MCF 10A (cell line): ENCODE measurements at regions of chr17 and their contacts with region 1.

Region 1: GRCh38 chr17:45051060-45051719 is at the start of gene DCAKD:
- DNase-seq: peak; percentile 95
- H3K4me3 Mint-ChIP-seq: peak within 1 kb of the TSS; percentile 75
- H3K27ac Mint-ChIP-seq: peak within 1 kb of the TSS; percentile 77
- H3K4me1 Mint-ChIP-seq: peaks cover 16% of the 10 kb centered on the region
- H3K27me3 Mint-ChIP-seq: no peaks in the 10 kb centered on the region
- CTCF ChIP-seq: no peak
- total RNA-seq, gene DCAKD: 23.1 and 23.3 TPM in 2 replicates

Region 2: GRCh38 chr17:44899069-44899782 is 152.0 kb before region 1 on chr17 and contains the start of gene EFTUD2:
- CTCF ChIA-PET with region 1: interaction called, 4 read pairs
- POLR2A ChIA-PET with region 1: interaction called, 20 read pairs
- intact Hi-C with region 1: no loop called
- DNase-seq: peak; percentile 87
- H3K4me3 Mint-ChIP-seq: peak within 1 kb of the TSS; percentile 80
- H3K27ac Mint-ChIP-seq: peak within 1 kb of the TSS; percentile 99
- H3K4me1 Mint-ChIP-seq: peaks cover 21% of the 10 kb centered on the region
- H3K27me3 Mint-ChIP-seq: no peaks in the 10 kb centered on the region
- CTCF ChIP-seq: no peak
- total RNA-seq, gene EFTUD2: 119 and 125 TPM in 2 replicates

Region 3: GRCh38 chr17:44956998-44957981 is 93.9 kb before region 1 on chr17:
- CTCF ChIA-PET with region 1: no interaction called
- POLR2A ChIA-PET with region 1: no interaction called
- intact Hi-C with region 1: no loop called
- DNase-seq: no peak
- H3K4me3 Mint-ChIP-seq: no peak overlapping the region
- H3K27ac Mint-ChIP-seq: no peak overlapping the region
- H3K4me1 Mint-ChIP-seq: peaks cover 6% of the 10 kb centered on the region
- H3K27me3 Mint-ChIP-seq: no peaks in the 10 kb centered on the region
- CTCF ChIP-seq: no peak

Region 4: DNA sequence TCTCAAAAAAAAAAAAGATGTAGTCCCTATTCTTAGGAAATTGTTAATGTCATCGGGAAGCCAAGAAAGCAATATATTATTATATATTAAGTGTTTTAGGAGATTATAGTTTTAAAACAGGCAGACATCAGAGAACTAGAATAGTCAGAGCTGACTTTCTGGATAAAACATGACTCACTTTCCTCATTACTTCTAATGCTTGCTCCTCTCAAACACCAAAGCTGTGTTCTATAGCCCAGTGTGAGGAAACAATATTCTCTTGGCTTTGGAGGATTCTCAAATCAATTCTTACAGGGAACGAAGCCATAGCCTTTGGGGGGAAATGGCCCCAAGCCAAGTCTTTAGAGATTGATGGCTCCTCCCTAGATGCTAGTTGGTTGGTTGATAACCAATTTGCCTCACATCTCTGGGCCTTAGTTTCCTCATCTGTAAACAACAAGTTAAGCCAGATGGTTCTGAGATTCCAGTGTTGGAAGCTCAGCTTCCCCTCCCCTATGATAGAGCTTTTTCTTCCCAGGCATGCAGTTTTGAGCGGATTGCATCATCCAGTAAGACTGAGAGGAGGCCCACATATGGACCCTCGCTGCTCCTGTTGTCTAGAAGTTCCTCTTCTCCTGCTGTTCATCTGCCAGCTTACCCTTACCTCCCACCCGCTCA is 22.4 kb after region 1 on chr17:
- CTCF ChIA-PET with region 1: no interaction called
- POLR2A ChIA-PET with region 1: interaction called, 12 read pairs
- intact Hi-C with region 1: no loop called
- DNase-seq: no peak
- H3K4me3 Mint-ChIP-seq: no peak overlapping the region
- H3K27ac Mint-ChIP-seq: peak overlapping the region; percentile 25
- H3K4me1 Mint-ChIP-seq: peaks cover 16% of the 10 kb centered on the region
- H3K27me3 Mint-ChIP-seq: no peaks in the 10 kb centered on the region
- CTCF ChIP-seq: no peak

Region 5: DNA sequence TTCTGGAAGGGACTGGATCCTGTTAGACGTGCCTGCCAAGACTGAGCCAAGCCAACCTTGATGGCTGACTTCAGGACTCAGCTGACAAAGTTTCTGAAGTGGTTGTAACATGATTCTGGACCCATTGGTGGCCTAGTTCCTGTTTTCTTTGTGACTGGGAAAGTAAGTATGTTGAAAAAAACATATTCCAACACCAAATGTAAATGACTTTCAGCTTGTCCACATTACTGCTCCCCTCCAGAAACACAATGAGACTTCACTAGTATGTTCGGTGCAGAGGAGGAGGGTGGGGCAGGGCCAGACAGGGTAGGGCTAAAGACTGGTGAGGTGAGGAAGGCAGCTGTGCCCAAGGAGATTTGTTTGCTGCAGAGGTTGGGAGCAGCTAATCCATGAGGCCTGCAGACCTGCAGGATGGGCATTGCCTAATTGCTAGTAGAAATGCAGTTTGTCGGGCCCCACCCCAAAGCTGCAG is 36.4 kb after region 1 on chr17:
- CTCF ChIA-PET with region 1: interaction called, 4 read pairs
- POLR2A ChIA-PET with region 1: interaction called, 21 read pairs
- intact Hi-C with region 1: no loop called
- DNase-seq: no peak
- H3K4me3 Mint-ChIP-seq: no peak overlapping the region
- H3K27ac Mint-ChIP-seq: peak overlapping the region; percentile 12
- H3K4me1 Mint-ChIP-seq: peaks cover 8% of the 10 kb centered on the region
- H3K27me3 Mint-ChIP-seq: no peaks in the 10 kb centered on the region
- CTCF ChIP-seq: no peak

Region 6: GRCh38 chr17:45092932-45093430 is 41.8 kb after region 1 on chr17:
- CTCF ChIA-PET with region 1: interaction called, 6 read pairs
- POLR2A ChIA-PET with region 1: interaction called, 30 read pairs
- intact Hi-C with region 1: loop called (anchors 2 kb)
- DNase-seq: peak; percentile 96
- H3K4me3 Mint-ChIP-seq: peak overlapping the region; percentile 44
- H3K27ac Mint-ChIP-seq: peak overlapping the region; percentile 98
- H3K4me1 Mint-ChIP-seq: peaks cover 25% of the 10 kb centered on the region
- H3K27me3 Mint-ChIP-seq: no peaks in the 10 kb centered on the region
- CTCF ChIP-seq: no peak

Region 7: GRCh38 chr17:45161019-45161825 is 110.0 kb after region 1 on chr17:
- CTCF ChIA-PET with region 1: interaction called, 5 read pairs
- POLR2A ChIA-PET with region 1: interaction called, 15 read pairs
- intact Hi-C with region 1: no loop called
- DNase-seq: peak; percentile 100
- H3K4me3 Mint-ChIP-seq: peak overlapping the region; percentile 98
- H3K27ac Mint-ChIP-seq: peak overlapping the region; percentile 99
- H3K4me1 Mint-ChIP-seq: peaks cover 18% of the 10 kb centered on the region
- H3K27me3 Mint-ChIP-seq: no peaks in the 10 kb centered on the region
- CTCF ChIP-seq: no peak